ENCODE measurements at regions of chr4 and their contacts with region 1.

Region 1: GRCh38 chr4:107183155-107183774 is 147.2 kb upstream of the DKK2 start:
- DNase-seq: peak; percentile 55
- ATAC-seq: peak; percentile 100
- H3K4me3 ChIP-seq: no peak overlapping the region
- H3K27ac ChIP-seq: no peak overlapping the region
- H3K4me1 ChIP-seq: 0 out of 4 replicates have a peak, but pooled peaks cover 0 to 2% of the 10 kb centered on the region in 2 experiments
- H3K27me3 ChIP-seq: no peaks in the 10 kb centered on the region
- CTCF ChIP-seq: peak; percentile 66 to 78 (median 75); a peak in 5 of 6 replicates
- POLR2A ChIP-seq: no peak
- RAD21 ChIP-seq: peak; percentile 77

Region 2: DNA sequence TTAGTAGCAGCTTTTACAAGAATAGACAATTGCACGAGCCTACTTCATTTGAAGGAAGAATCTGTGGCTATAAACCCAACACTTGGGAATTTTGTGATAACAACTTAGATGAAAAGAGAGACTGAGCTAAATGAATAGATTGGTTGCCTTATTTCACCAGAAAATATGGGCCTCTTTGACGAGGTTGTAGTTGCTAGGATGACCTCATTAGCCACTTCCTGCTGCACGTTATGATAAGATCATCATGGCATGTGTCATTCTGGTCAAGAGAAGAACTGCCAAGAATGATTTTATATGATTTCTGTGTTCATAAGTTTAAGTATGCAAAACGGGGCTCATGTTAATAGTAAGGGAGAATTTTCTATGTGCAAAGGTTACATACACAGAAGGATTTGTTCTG is 492.8 kb before region 1 on chr4:
- CTCF ChIA-PET with region 1: no interaction called
- POLR2A ChIA-PET with region 1: no interaction called
- RAD21 ChIA-PET with region 1: no interaction called
- intact Hi-C with region 1: loop called (anchors 2 kb)
- DNase-seq: no peak
- ATAC-seq: no peak
- H3K4me3 ChIP-seq: no peak overlapping the region
- H3K27ac ChIP-seq: no peak overlapping the region
- H3K4me1 ChIP-seq: no peaks in the 10 kb centered on the region
- H3K27me3 ChIP-seq: no peaks in the 10 kb centered on the region
- CTCF ChIP-seq: no peak
- POLR2A ChIP-seq: no peak
- RAD21 ChIP-seq: no peak

Region 3: GRCh38 chr4:106898621-106899230 is 284.5 kb before region 1 on chr4:
- CTCF ChIA-PET with region 1: interaction called, 3 read pairs
- POLR2A ChIA-PET with region 1: no interaction called
- RAD21 ChIA-PET with region 1: no interaction called
- intact Hi-C with region 1: loop called (anchors 5 kb)
- DNase-seq: peak; percentile 51
- ATAC-seq: peak; percentile 93
- H3K4me3 ChIP-seq: no peak overlapping the region
- H3K27ac ChIP-seq: no peak overlapping the region
- H3K4me1 ChIP-seq: no peaks in the 10 kb centered on the region
- H3K27me3 ChIP-seq: no peaks in the 10 kb centered on the region
- CTCF ChIP-seq: peak; percentile 51 to 89 (median 74)
- POLR2A ChIP-seq: no peak
- RAD21 ChIP-seq: peak; percentile 72

Region 4: GRCh38 chr4:107050525-107051135 is 132.6 kb before region 1 on chr4:
- CTCF ChIA-PET with region 1: no interaction called
- POLR2A ChIA-PET with region 1: no interaction called
- RAD21 ChIA-PET with region 1: no interaction called
- intact Hi-C with region 1: loop called (anchors 1 kb)
- DNase-seq: peak; percentile 21
- ATAC-seq: peak; percentile 69
- H3K4me3 ChIP-seq: no peak overlapping the region
- H3K27ac ChIP-seq: no peak overlapping the region
- H3K4me1 ChIP-seq: no peaks in the 10 kb centered on the region
- H3K27me3 ChIP-seq: no peaks in the 10 kb centered on the region
- CTCF ChIP-seq: peak; percentile 37 to 73 (median 70); a peak in 5 of 6 replicates
- POLR2A ChIP-seq: no peak
- RAD21 ChIP-seq: peak; percentile 50

Region 5: DNA sequence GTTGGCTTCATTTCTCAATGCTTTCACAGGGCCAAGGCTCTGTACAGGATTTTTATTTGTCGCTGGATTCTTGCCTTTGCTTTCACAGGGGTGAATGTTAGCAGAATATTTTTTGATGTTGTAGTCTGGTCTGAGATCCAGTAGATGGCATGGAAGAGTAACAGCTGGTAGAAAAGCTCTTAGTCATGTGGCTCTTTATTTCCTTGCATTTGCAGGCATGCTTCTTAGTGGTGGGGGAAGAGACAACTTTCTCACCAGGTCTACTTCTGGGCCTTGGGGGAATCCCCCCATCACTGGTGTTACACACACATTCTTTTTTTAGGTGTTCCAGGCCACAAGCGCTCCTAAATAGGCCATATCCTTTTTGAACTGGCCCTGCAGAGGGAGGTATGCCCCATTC is 88.9 kb before region 1 on chr4:
- CTCF ChIA-PET with region 1: interaction called, 8 read pairs
- POLR2A ChIA-PET with region 1: no interaction called
- RAD21 ChIA-PET with region 1: no interaction called
- intact Hi-C with region 1: loop called (anchors 2 kb)
- DNase-seq: peak; percentile 32
- ATAC-seq: peak; percentile 75
- H3K4me3 ChIP-seq: no peak overlapping the region
- H3K27ac ChIP-seq: no peak overlapping the region
- H3K4me1 ChIP-seq: no peaks in the 10 kb centered on the region
- H3K27me3 ChIP-seq: no peaks in the 10 kb centered on the region
- CTCF ChIP-seq: peak; percentile 48 to 50 (median 49); a peak in 4 of 6 replicates
- POLR2A ChIP-seq: no peak
- RAD21 ChIP-seq: peak; percentile 58

Region 6: GRCh38 chr4:107519053-107519452 is 335.8 kb after region 1 on chr4:
- CTCF ChIA-PET with region 1: interaction called, 5 read pairs
- POLR2A ChIA-PET with region 1: no interaction called
- RAD21 ChIA-PET with region 1: no interaction called
- intact Hi-C with region 1: loop called (anchors 10 kb)
- DNase-seq: peak; percentile 19
- ATAC-seq: peak; percentile 62
- H3K4me3 ChIP-seq: no peak overlapping the region
- H3K27ac ChIP-seq: no peak overlapping the region
- H3K4me1 ChIP-seq: no peaks in the 10 kb centered on the region
- H3K27me3 ChIP-seq: no peaks in the 10 kb centered on the region
- CTCF ChIP-seq: peak; percentile 42 to 67 (median 49); a peak in 4 of 6 replicates
- POLR2A ChIP-seq: no peak
- RAD21 ChIP-seq: peak; percentile 72

Measured in HCT116 (cell line).